ENCODE measurements at regions of chr9 and their contacts with region 1.

Region 1: GRCh38 chr9:7756088-7756487 is 43.5 kb downstream of the DMAC1 start:
- DNase-seq: no peak
- H3K4me3 ChIP-seq: no peak overlapping the region
- H3K27ac ChIP-seq: no peak overlapping the region
- H3K4me1 ChIP-seq: no peaks in the 10 kb centered on the region
- H3K27me3 ChIP-seq: no peaks in the 10 kb centered on the region
- CTCF ChIP-seq: no peak
- POLR2A ChIP-seq: no peak

Region 2: GRCh38 chr9:7172154-7173125 is 583.6 kb before region 1 on chr9:
- intact Hi-C with region 1: loop called (anchors 5 kb)
- DNase-seq: no peak
- H3K4me3 ChIP-seq: no peak overlapping the region
- H3K27ac ChIP-seq: no peak overlapping the region
- H3K4me1 ChIP-seq: no peaks in the 10 kb centered on the region
- H3K27me3 ChIP-seq: no peaks in the 10 kb centered on the region
- CTCF ChIP-seq: no peak
- POLR2A ChIP-seq: no peak

Region 3: GRCh38 chr9:7394007-7394774 is 361.9 kb before region 1 on chr9:
- intact Hi-C with region 1: no loop called
- DNase-seq: no peak
- H3K4me3 ChIP-seq: no peak overlapping the region
- H3K27ac ChIP-seq: no peak overlapping the region
- H3K4me1 ChIP-seq: no peaks in the 10 kb centered on the region
- H3K27me3 ChIP-seq: no peaks in the 10 kb centered on the region
- CTCF ChIP-seq: no peak
- POLR2A ChIP-seq: no peak